Heart left ventricle (tissue), 16 donors: ENCODE measurements at regions of chr6 and their contacts with region 1.

Region 1: GRCh38 chr6:44966449-44967092 is 361.6 kb upstream of the RUNX2 start:
- DNase-seq: no peak
- ATAC-seq: peak in 2 of 4 donors; percentile 45 to 78
- H3K4me3 ChIP-seq: no peak overlapping the region
- H3K27ac ChIP-seq: peak overlapping the region in 5 of 12 donors; percentile 38 to 67 (median 46)
- H3K4me1 ChIP-seq: peaks cover 0 to 17% (median 4%) of the 10 kb centered on the region in 12 donors
- H3K27me3 ChIP-seq: no peaks in the 10 kb centered on the region
- CTCF ChIP-seq: no peak
- POLR2A ChIP-seq: no peak

Region 2: GRCh38 chr6:44921798-44922197 is 44.8 kb before region 1 on chr6:
- intact Hi-C with region 1: loop called in 1 of 10 experiments (anchors 5 kb)
- DNase-seq: peak; percentile 62 to 81 (median 63)
- ATAC-seq: peak; percentile 95 to 98 (median 96)
- H3K4me3 ChIP-seq: no peak overlapping the region
- H3K27ac ChIP-seq: peak overlapping the region in 10 of 12 donors; percentile 5 to 81 (median 52)
- H3K4me1 ChIP-seq: peaks cover 0 to 20% (median 4%) of the 10 kb centered on the region in 12 donors
- H3K27me3 ChIP-seq: no peaks in the 10 kb centered on the region
- CTCF ChIP-seq: peak in 2 of 12 donors; percentile 16 to 21
- POLR2A ChIP-seq: no peak

Region 3: DNA sequence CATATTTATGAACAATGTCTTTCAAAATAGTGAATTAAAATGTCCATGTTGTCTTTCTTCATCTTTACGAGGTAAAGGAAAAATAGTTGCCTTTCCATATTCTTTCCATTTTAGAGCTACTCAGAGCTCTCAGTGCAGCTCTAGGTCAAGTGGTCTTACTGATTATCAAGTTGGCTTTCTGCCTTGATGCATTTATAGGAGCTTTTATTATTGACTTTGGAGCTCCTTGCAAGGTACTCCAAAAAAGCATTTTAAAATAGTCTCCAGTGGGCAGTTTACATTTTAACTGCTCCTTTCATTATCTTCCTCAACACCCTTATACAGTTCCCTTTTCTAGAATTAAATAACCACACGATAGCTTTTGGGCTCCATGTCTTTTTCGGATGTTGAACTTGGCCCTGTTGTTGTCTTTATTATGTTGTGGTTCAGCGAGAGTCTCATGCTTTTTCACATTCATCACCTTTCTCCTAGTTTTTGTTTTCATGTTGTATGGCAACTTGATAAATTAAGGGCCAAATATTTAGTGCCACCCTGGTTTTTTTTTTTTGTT is 926.2 kb after region 1 on chr6:
- intact Hi-C with region 1: no loop called
- DNase-seq: no peak
- ATAC-seq: no peak
- H3K4me3 ChIP-seq: no peak overlapping the region
- H3K27ac ChIP-seq: no peak overlapping the region
- H3K4me1 ChIP-seq: peaks cover 0 to 25% (median 4%) of the 10 kb centered on the region in 12 donors
- H3K27me3 ChIP-seq: no peaks in the 10 kb centered on the region
- CTCF ChIP-seq: no peak
- POLR2A ChIP-seq: no peak